ENCODE measurements at regions of chr13 and their contacts with region 1.

Region 1: GRCh38 chr13:110819203-110820014 is 95.5 kb downstream of the ANKRD10 start:
- DNase-seq: peak; percentile 59
- H3K4me3 Mint-ChIP-seq: no peak overlapping the region
- H3K27ac Mint-ChIP-seq: no peak overlapping the region
- H3K4me1 Mint-ChIP-seq: no peaks in the 10 kb centered on the region
- H3K27me3 Mint-ChIP-seq: no peaks in the 10 kb centered on the region
- CTCF ChIP-seq: peak; percentile 56

Region 2: GRCh38 chr13:110715395-110716235 is 103.8 kb before region 1 on chr13:
- CTCF ChIA-PET with region 1: no interaction called
- intact Hi-C with region 1: loop called (anchors 5 kb)
- DNase-seq: peak; percentile 85
- H3K4me3 Mint-ChIP-seq: peak overlapping the region; percentile 90
- H3K27ac Mint-ChIP-seq: peak overlapping the region; percentile 76
- H3K4me1 Mint-ChIP-seq: no peaks in the 10 kb centered on the region
- H3K27me3 Mint-ChIP-seq: no peaks in the 10 kb centered on the region
- CTCF ChIP-seq: no peak

Measured in Calu3 (cell line).